ENCODE measurements at regions of chr2 and their contacts with region 1.

Region 1: GRCh38 chr2:211216221-211216620 is 659.8 kb downstream of the CPS1 start:
- DNase-seq: peak in 1 of 2 experiments; percentile 1
- H3K4me3 ChIP-seq: no peak overlapping the region
- H3K27ac ChIP-seq: no peak overlapping the region
- H3K4me1 ChIP-seq: no peaks in the 10 kb centered on the region
- H3K27me3 ChIP-seq: no peaks in the 10 kb centered on the region
- CTCF ChIP-seq: peak; percentile 48; the same call in 1 of the 2 replicates

Region 2: DNA sequence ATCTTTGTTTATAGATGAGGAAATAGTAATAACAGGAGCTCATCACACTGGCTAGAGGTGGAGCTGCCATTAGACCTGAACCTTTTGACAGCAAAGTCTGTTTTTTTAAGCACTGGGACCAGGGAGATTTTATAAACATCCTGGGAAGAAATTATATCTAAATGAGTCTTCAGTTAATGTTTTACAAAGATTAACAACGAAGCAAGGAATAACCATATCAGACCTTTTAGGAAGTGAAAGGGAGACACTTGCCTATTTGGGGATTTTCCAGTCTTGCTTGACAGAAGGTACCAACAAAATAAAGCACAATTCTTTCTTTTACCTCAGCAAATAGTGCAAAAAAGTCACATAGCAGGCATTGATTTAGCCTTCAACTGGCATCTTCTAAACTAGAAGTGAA is 117.2 kb after region 1 on chr2:
- CTCF ChIA-PET with region 1: no interaction called
- POLR2A ChIA-PET with region 1: interaction called, 16 read pairs
- intact Hi-C with region 1: no loop called
- DNase-seq: no peak
- H3K4me3 ChIP-seq: no peak overlapping the region
- H3K27ac ChIP-seq: no peak overlapping the region
- H3K4me1 ChIP-seq: no peaks in the 10 kb centered on the region
- H3K27me3 ChIP-seq: no peaks in the 10 kb centered on the region
- CTCF ChIP-seq: no peak